Breast epithelium (tissue), 4 donors: ENCODE measurements at regions of chr10 and their contacts with region 1.

Region 1: GRCh38 chr10:132828681-132829080 is 42.7 kb upstream of the NKX6-2 start:
- DNase-seq: peak in 1 of 2 donors; percentile 36
- H3K4me3 ChIP-seq: no peak overlapping the region
- H3K27ac ChIP-seq: no peak overlapping the region
- H3K4me1 ChIP-seq: no peaks in the 10 kb centered on the region
- H3K27me3 ChIP-seq: peaks cover 0 to 14% of the 10 kb centered on the region in 2 donors
- CTCF ChIP-seq: no peak
- POLR2A ChIP-seq: no peak

Region 2: DNA sequence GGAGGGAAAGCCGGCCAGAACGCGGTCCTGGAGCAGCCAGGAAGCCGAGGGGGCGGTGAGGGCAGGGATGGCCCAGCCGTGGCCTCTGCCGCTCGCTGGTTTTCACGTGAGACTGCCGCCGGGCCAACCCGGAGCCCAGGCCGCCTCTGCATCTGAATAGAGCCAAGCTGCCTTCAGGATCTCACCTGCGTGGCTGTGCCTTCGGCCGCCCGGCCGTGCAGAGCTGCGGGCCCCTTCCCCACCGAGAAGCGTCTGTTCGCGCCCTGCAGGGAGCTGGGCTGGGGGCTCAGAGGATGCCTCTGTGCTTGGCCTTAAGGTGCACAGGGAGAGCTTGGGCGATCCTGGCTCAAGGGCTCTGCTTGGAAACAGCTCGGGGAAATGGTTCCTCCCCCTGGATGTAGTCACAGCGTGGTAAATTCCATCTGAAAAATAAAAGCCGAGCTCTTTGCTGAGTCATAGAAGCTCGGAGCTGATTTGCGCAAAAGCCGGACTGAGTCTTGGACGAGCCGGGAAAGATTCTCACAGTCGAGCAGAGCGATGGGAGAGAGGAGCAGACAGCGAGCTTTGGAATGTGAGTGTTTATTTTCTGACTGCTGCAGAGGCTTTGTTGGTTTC is 763.1 kb before region 1 on chr10 and contains the start of gene JAKMIP3:
- intact Hi-C with region 1: no loop called
- DNase-seq: peak in 1 of 2 donors; percentile 36
- H3K4me3 ChIP-seq: peak within 1 kb of the TSS; percentile 39 to 74 (median 56)
- H3K27ac ChIP-seq: peak within 1 kb of the TSS; percentile 62 to 82
- H3K4me1 ChIP-seq: peaks cover 0 to 3% of the 10 kb centered on the region in 2 donors
- H3K27me3 ChIP-seq: no peaks in the 10 kb centered on the region
- CTCF ChIP-seq: no peak
- POLR2A ChIP-seq: no peak
- total RNA-seq, gene JAKMIP3: 0.16 to 1.3 (median 0.98) TPM

Region 3: GRCh38 chr10:132865851-132866617 is 37.4 kb after region 1 on chr10:
- intact Hi-C with region 1: loop called (anchors 2 kb)
- DNase-seq: peak in 1 of 2 donors; percentile 46
- H3K4me3 ChIP-seq: no peak overlapping the region
- H3K27ac ChIP-seq: no peak overlapping the region
- H3K4me1 ChIP-seq: no peaks in the 10 kb centered on the region
- H3K27me3 ChIP-seq: peaks cover 0 to 58% of the 10 kb centered on the region in 2 donors
- CTCF ChIP-seq: no peak
- POLR2A ChIP-seq: no peak